Posterior cingulate gyrus (tissue), 11 donors: ENCODE measurements at regions of chr2 and their contacts with region 1.

Region 1: GRCh38 chr2:234135720-234136221 is 85.3 kb downstream of the SPP2 start:
- DNase-seq: peak; percentile 28 to 94 (median 57)

Region 2: GRCh38 chr2:233976690-233977294 is 159.0 kb before region 1 on chr2:
- intact Hi-C with region 1: loop called (anchors 10 kb)
- DNase-seq: no peak

Region 3: DNA sequence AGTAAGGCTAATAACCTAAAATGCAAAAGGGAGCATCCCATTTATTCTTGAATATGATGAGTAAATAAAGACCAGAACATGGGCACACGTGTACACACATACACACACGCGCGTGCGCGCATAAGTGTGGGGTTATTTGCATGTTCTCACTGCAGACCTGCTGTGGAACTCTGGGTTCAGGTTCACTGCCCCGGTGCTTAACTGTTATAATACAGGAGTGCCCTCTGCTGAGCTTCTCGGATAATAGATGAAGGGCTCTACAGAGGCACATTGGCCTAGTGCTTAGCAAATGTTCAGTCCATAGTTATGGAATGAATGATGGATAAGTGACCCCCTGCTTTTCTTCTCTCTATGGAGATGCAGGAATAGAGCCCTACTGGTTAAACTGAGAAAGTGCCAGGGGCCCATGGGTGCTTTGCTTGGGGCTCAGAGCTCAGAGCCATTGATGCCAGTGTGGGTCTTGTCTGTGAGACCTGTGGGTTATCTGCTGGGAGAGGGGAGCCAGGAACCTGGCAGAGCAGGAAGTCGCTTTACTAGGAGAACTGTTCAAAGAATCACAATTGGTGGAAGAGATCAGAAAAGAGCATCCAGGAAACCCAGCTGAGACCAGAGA is 364.7 kb after region 1 on chr2:
- intact Hi-C with region 1: loop called (anchors 1 kb)
- DNase-seq: peak in 2 of 10 donors; percentile 41 to 79

Region 4: GRCh38 chr2:234544659-234545611 is 409.2 kb after region 1 on chr2:
- intact Hi-C with region 1: loop called (anchors 2 kb)
- DNase-seq: peak; percentile 34 to 94 (median 72)

Region 5: GRCh38 chr2:235116885-235117492 is 981.2 kb after region 1 on chr2:
- intact Hi-C with region 1: loop called (anchors 5 kb)
- DNase-seq: no peak